Activated T-helper 1 cell treated with anti-CD3 and anti-CD28 coated beads, Interleukin-12 subunit alpha, Interleukin-12 subunit beta, Interleukin-2, Interleukin-4 antibody, amounts not matched to agents 30 ng/mL and 10 ng/mL and 1 ng/mL, durations not matched to agents 14 hours and 24 hours and 36 hours (primary cell): ENCODE measurements at regions of chr3 and their contacts with region 1.

Region 1: GRCh38 chr3:40505599-40506462 is at the start of gene ZNF620:
- DNase-seq: peak; percentile 34
- H3K4me3 Mint-ChIP-seq: peak within 1 kb of the TSS; percentile 89
- H3K27ac Mint-ChIP-seq: peak within 1 kb of the TSS; percentile 47
- H3K4me1 Mint-ChIP-seq: peaks cover 20% of the 10 kb centered on the region
- H3K27me3 Mint-ChIP-seq: no peaks in the 10 kb centered on the region
- total RNA-seq, gene ZNF620: 5.5 and 6.0 TPM in 2 replicates

Region 2: GRCh38 chr3:40068636-40069035 is 437.2 kb before region 1 on chr3:
- intact Hi-C with region 1: no loop called
- DNase-seq: no peak
- H3K4me3 Mint-ChIP-seq: no peak overlapping the region
- H3K27ac Mint-ChIP-seq: no peak overlapping the region
- H3K4me1 Mint-ChIP-seq: no peaks in the 10 kb centered on the region
- H3K27me3 Mint-ChIP-seq: no peaks in the 10 kb centered on the region

Region 3: GRCh38 chr3:40333416-40333815 is 172.4 kb before region 1 on chr3:
- intact Hi-C with region 1: no loop called
- DNase-seq: no peak
- H3K4me3 Mint-ChIP-seq: no peak overlapping the region
- H3K27ac Mint-ChIP-seq: no peak overlapping the region
- H3K4me1 Mint-ChIP-seq: no peaks in the 10 kb centered on the region
- H3K27me3 Mint-ChIP-seq: peaks cover 5% of the 10 kb centered on the region

Region 4: GRCh38 chr3:40476478-40477470 is 29.1 kb before region 1 on chr3 and contains the start of gene ZNF619:
- intact Hi-C with region 1: loop called (anchors 1 kb)
- DNase-seq: peak; percentile 31
- H3K4me3 Mint-ChIP-seq: peak within 1 kb of the TSS; percentile 91
- H3K27ac Mint-ChIP-seq: peak within 1 kb of the TSS; percentile 78
- H3K4me1 Mint-ChIP-seq: peaks cover 27% of the 10 kb centered on the region
- H3K27me3 Mint-ChIP-seq: peaks cover 10% of the 10 kb centered on the region
- total RNA-seq, gene ZNF619: 7.1 and 8.2 TPM in 2 replicates